Common myeloid progenitor, CD34-positive (primary cell): ENCODE measurements at regions of chr10 and their contacts with region 1.

Region 1: DNA sequence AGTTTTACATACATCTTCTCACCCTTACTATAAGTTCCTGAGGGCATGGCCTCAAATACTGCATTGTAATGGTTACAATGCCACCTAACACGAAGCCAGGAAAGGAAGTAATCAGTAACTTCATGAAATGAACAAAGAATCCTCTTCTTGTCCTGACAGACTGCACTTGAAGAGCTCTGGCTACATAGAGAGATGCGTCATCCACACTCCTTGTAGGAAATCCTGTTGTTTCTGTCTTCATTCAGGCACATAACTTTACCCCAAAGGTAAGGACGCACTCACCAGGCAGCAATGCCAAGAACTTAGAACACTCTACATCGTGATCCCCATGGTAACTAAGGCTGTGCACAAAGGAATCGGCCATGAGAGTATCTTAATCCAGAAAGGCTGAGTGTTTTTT is 80.3 kb upstream of the ARID5B start:
- DNase-seq: no peak
- H3K4me3 ChIP-seq: no peak overlapping the region
- H3K27ac ChIP-seq: no peak overlapping the region
- H3K4me1 ChIP-seq: peaks cover 0 to 27% (median 11%) of the 10 kb centered on the region in 4 experiments
- H3K27me3 ChIP-seq: no peaks in the 10 kb centered on the region

Region 2: DNA sequence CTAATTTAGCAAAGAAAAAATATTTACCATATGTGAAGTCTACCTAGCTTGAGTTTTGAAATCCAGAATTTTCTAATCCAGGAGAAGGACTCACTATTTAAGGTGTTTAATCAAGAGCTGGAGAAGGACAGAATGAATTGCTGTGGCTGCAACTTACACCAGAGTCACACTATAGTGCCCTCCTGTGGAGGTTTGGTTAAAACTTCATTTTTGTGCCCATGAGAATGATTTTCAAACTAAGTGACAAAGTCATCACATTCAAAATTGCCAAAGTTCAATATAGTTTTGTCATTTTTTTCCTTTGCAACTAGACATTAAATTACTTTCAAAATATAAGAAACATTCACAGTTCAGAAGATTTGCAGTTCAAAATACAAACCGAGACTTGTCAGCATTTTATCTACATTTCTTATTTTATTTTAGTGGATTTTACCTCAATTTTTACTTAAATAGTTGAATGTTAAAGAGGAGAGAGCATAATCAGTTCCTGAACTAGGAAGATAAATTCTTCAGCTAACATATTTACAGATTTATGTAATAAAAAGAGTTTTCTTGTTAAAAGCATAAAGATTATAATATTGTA is 87.7 kb before region 1 on chr10:
- CTCF ChIA-PET with region 1: interaction called, 14 read pairs
- POLR2A ChIA-PET with region 1: no interaction called
- DNase-seq: peak; percentile 58 to 75 (median 74)
- H3K4me3 ChIP-seq: no peak overlapping the region
- H3K27ac ChIP-seq: no peak overlapping the region
- H3K4me1 ChIP-seq: peaks cover 0 to 10% (median 7%) of the 10 kb centered on the region in 4 experiments
- H3K27me3 ChIP-seq: no peaks in the 10 kb centered on the region

Region 3: GRCh38 chr10:61760943-61761824 is 60.0 kb before region 1 on chr10:
- CTCF ChIA-PET with region 1: interaction called, 14 read pairs
- POLR2A ChIA-PET with region 1: no interaction called
- DNase-seq: no peak
- H3K4me3 ChIP-seq: no peak overlapping the region
- H3K27ac ChIP-seq: peak overlapping the region in 1 of 2 experiments; percentile 89
- H3K4me1 ChIP-seq: peaks cover 8 to 83% (median 45%) of the 10 kb centered on the region in 4 experiments
- H3K27me3 ChIP-seq: no peaks in the 10 kb centered on the region

Region 4: DNA sequence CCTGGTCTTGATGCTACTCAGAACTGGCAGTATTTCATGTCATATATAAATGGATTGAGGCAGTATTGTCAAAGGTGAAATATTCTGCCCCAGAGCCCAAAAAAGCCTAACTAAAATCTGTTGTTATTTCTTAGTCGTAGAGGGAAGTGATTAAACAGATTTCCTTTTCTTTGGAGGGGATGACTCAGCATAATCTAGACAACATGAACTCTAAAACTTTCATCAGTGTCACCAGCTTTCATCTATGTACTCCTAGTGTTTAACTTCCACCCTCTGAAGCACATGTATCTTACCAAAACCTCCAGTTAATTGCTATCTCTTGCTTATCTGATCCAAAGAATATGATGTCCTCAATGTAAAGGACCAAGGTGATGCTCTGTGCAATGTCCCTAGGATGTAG is 16.7 kb before region 1 on chr10:
- CTCF ChIA-PET with region 1: interaction called, 23 read pairs
- POLR2A ChIA-PET with region 1: no interaction called
- DNase-seq: peak; percentile 62 to 93 (median 92)
- H3K4me3 ChIP-seq: no peak overlapping the region
- H3K27ac ChIP-seq: no peak overlapping the region
- H3K4me1 ChIP-seq: peaks cover 3 to 26% (median 15%) of the 10 kb centered on the region in 4 experiments
- H3K27me3 ChIP-seq: no peaks in the 10 kb centered on the region

Region 5: GRCh38 chr10:61810263-61810662 is 10.9 kb before region 1 on chr10:
- CTCF ChIA-PET with region 1: interaction called, 23 read pairs
- POLR2A ChIA-PET with region 1: interaction called, 3 read pairs
- DNase-seq: no peak
- H3K4me3 ChIP-seq: no peak overlapping the region
- H3K27ac ChIP-seq: no peak overlapping the region
- H3K4me1 ChIP-seq: peaks cover 3 to 19% (median 6%) of the 10 kb centered on the region in 4 experiments
- H3K27me3 ChIP-seq: no peaks in the 10 kb centered on the region